ENCODE measurements at regions of chr13 and their contacts with region 1.

Region 1: DNA sequence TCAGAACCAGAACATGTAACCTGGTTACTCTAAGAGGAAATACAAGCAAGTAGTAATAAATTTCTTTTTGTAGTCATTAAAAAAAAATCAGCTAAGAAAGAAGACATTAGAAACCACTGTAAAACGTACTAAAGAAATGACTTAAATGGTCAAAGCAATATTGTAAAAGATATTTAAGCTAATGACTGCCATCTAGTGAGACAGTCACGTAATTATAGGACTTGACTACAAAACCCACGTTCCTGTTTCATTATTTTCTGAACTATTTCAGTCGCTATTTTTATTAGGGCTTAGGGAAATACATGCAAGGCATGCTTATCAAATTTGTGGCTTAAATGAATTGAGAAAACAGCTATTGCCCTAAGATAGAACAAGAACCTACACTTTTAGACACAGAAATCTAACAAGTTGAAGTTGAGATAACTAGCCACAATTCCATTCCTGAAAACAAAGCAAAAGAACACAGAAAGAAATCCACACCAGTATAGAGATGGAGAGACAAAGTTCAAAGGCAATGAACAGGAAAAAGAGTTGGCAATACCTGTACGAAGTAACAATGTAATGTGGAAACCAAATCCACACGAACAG is 17.9 kb downstream of the ALG5 start:
- DNase-seq: no peak
- H3K4me3 ChIP-seq: no peak overlapping the region
- H3K27ac ChIP-seq: no peak overlapping the region
- H3K4me1 ChIP-seq: no peaks in the 10 kb centered on the region
- H3K27me3 ChIP-seq: no peaks in the 10 kb centered on the region
- CTCF ChIP-seq: peak; percentile 36

Region 2: DNA sequence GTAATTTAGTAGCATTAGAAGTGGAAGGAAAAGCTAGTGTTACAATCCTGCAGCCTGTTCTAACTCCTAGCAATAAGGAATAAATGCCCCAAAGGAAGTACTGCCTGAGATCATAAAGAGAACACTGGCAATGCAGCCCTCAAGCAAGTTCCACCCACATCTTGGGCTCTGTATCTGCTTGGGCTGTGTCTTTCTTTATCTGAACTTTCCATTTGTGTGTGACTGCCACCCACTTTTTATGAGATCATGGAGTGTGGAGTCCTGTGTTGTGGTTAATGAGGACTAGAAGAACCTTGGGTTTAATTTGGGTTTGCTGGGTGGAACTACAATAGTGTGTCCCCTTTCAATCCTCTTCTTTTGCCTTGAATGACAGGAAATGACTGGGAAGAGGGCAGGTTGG is 124.0 kb before region 1 on chr13:
- intact Hi-C with region 1: loop called (anchors 2 kb)
- DNase-seq: no peak
- H3K4me3 ChIP-seq: no peak overlapping the region
- H3K27ac ChIP-seq: no peak overlapping the region
- H3K4me1 ChIP-seq: no peaks in the 10 kb centered on the region
- H3K27me3 ChIP-seq: no peaks in the 10 kb centered on the region
- CTCF ChIP-seq: no peak

Region 3: GRCh38 chr13:37209621-37210580 is 228.7 kb after region 1 on chr13:
- intact Hi-C with region 1: no loop called
- DNase-seq: no peak
- H3K4me3 ChIP-seq: no peak overlapping the region
- H3K27ac ChIP-seq: no peak overlapping the region
- H3K4me1 ChIP-seq: no peaks in the 10 kb centered on the region
- H3K27me3 ChIP-seq: no peaks in the 10 kb centered on the region
- CTCF ChIP-seq: no peak

Region 4: DNA sequence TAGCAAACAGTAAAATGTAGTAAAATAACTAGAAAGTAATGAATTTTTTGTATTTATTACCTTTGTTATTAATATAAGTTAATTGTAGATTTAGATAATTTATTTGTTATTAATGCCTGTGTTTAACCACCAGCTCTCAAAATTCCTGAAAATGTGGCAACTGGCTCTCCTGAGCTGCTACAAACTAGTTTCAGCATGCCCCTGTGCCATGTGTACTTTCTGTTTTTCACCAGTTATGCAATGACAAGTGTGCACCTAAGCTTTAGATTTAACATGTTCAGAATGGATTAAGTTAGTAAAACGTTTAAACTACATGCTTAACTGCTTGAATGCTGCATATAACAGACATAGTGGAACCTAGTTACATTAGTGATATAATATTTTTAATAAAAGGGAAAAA is 529.2 kb after region 1 on chr13:
- intact Hi-C with region 1: no loop called
- DNase-seq: no peak
- H3K4me3 ChIP-seq: no peak overlapping the region
- H3K27ac ChIP-seq: no peak overlapping the region
- H3K4me1 ChIP-seq: no peaks in the 10 kb centered on the region
- H3K27me3 ChIP-seq: no peaks in the 10 kb centered on the region
- CTCF ChIP-seq: no peak